ENCODE measurements at regions of chr12 and their contacts with region 1.

Region 1: GRCh38 chr12:50309950-50310349 is 26.6 kb upstream of the LIMA1 start:
- DNase-seq: no peak
- H3K4me3 Mint-ChIP-seq: no peak overlapping the region
- H3K27ac Mint-ChIP-seq: no peak overlapping the region
- H3K4me1 Mint-ChIP-seq: no peaks in the 10 kb centered on the region
- H3K27me3 Mint-ChIP-seq: no peaks in the 10 kb centered on the region

Region 2: DNA sequence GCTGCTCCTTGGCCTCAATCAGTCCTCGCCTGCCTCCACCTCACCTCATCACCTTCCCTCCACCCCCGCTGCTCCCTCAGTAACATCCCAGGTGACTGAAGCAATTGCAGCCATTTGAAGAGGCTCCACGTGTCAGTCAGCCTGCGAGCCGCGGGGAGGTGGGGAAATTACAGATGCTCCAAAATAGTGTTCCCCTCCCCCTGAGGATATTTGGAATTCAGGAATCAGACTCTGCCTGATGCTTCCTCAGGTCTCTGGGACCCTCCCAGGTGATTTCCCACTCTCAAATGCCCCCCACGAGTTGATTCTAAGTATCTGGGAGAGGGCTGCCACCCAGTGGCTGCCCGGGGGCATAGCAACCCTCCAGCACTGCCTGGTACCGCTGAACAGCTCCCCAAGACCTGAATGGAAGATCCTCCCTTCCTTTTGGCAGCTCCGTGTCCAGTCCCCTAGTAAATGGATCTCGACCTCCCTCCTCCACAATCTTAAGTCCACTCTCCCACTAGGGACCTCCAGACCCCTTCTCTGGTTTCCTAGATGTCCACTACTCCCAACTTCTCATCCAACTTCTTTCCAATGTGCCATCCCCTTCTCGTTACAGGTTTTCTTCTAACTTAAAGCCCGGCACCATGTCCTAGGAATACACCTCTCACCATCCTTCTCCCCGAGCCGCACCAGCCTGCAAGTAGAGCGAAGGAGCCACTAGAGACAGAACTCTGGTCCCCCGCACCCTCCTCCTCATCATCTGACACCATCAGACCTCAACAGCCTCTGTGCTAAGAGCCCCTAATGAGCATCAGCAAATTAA is 253.9 kb before region 1 on chr12:
- CTCF ChIA-PET with region 1: no interaction called
- POLR2A ChIA-PET with region 1: no interaction called
- DNase-seq: peak; percentile 63
- H3K4me3 Mint-ChIP-seq: peak overlapping the region; percentile 28
- H3K27ac Mint-ChIP-seq: no peak overlapping the region
- H3K4me1 Mint-ChIP-seq: peaks cover 44% of the 10 kb centered on the region
- H3K27me3 Mint-ChIP-seq: peaks cover 44% of the 10 kb centered on the region

Region 3: GRCh38 chr12:50246873-50247612 is 62.9 kb before region 1 on chr12:
- CTCF ChIA-PET with region 1: no interaction called
- POLR2A ChIA-PET with region 1: no interaction called
- DNase-seq: peak; percentile 10
- H3K4me3 Mint-ChIP-seq: no peak overlapping the region
- H3K27ac Mint-ChIP-seq: peak overlapping the region; percentile 62
- H3K4me1 Mint-ChIP-seq: peaks cover 29% of the 10 kb centered on the region
- H3K27me3 Mint-ChIP-seq: no peaks in the 10 kb centered on the region

Region 4: GRCh38 chr12:50362671-50363070 is 52.7 kb after region 1 on chr12:
- CTCF ChIA-PET with region 1: interaction called, 3 read pairs
- POLR2A ChIA-PET with region 1: interaction called, 12 read pairs
- DNase-seq: no peak
- H3K4me3 Mint-ChIP-seq: no peak overlapping the region
- H3K27ac Mint-ChIP-seq: no peak overlapping the region
- H3K4me1 Mint-ChIP-seq: no peaks in the 10 kb centered on the region
- H3K27me3 Mint-ChIP-seq: peaks cover 3% of the 10 kb centered on the region

Measured in activated CD4-positive, alpha-beta T cell treated with anti-CD3 and anti-CD28 coated beads, Interleukin-2, amount 10 ng/mL, durations not matched to agents 7 days and 5 days (primary cell).